ENCODE measurements at regions of chr12 and their contacts with region 1.

Region 1: GRCh38 chr12:56468216-56469006 is at the start of gene SPRYD4:
- DNase-seq: peak; percentile 97
- total RNA-seq, gene SPRYD4: 3.3 TPM

Region 2: DNA sequence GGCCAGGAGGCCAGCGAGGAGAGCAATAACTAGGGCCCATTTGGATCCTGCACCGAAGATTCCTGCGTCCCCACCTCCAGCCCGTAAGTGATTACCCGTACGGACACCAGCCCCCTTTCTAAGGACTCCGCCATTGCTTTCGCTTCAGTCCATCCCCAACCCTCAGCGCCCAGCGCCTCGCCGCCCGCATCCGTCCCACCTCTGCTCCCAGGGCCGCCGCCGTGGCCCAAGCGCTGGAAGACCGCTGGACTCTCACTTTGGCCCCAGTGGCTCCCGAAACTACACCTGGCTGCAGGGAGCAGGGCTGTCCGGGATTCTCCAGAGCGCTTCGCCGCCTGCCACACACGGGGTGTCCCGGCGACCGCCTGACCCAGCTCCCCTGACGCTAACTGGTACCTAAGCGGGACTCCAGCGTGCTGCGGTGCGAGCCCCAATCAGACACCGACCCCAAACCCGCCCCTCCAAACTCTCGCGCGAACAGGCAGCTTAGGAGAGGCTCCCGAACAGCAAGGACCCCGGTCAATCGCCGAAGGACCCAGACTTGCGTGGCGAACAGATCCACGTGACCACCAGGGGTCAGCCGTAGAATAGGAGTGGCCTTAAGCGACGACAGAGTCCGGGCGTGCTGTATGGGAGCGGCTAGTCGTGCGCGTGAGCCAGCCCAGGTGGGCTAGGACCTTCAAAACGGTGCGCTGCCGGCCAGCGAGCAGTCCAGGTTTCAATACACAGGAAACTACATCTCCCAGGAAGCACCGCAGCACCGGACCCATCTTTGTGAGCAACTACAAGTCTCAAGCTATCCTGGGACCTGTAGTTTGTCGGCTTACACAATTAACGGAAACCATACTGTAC is 152.6 kb before region 1 on chr12 and contains the start of gene CNPY2:
- intact Hi-C with region 1: loop called (anchors 5 kb)
- DNase-seq: peak; percentile 95
- total RNA-seq, gene CNPY2: 38.0 TPM

Measured in cardiac septum (tissue), 1 donor.